Activated naive CD4-positive, alpha-beta T cell treated with anti-CD3 and anti-CD28 coated beads for 36 hours (primary cell): ENCODE measurements at regions of chr6 and their contacts with region 1.

Region 1: GRCh38 chr6:38570750-38571149 is 69.0 kb downstream of the BTBD9 start:
- DNase-seq: no peak
- H3K4me3 Mint-ChIP-seq: no peak overlapping the region
- H3K27ac Mint-ChIP-seq: no peak overlapping the region
- H3K4me1 Mint-ChIP-seq: peaks cover 23% of the 10 kb centered on the region
- H3K27me3 Mint-ChIP-seq: no peaks in the 10 kb centered on the region

Region 2: GRCh38 chr6:37698261-37699137 is 872.3 kb before region 1 on chr6:
- CTCF ChIA-PET with region 1: no interaction called
- intact Hi-C with region 1: loop called (anchors 2 kb)
- DNase-seq: peak; percentile 48
- H3K4me3 Mint-ChIP-seq: peak overlapping the region; percentile 98
- H3K27ac Mint-ChIP-seq: peak overlapping the region; percentile 82
- H3K4me1 Mint-ChIP-seq: peaks cover 18% of the 10 kb centered on the region
- H3K27me3 Mint-ChIP-seq: peaks cover 19% of the 10 kb centered on the region

Region 3: GRCh38 chr6:37791156-37791919 is 779.4 kb before region 1 on chr6:
- CTCF ChIA-PET with region 1: no interaction called
- intact Hi-C with region 1: loop called (anchors 5 kb)
- DNase-seq: peak; percentile 95
- H3K4me3 Mint-ChIP-seq: no peak overlapping the region
- H3K27ac Mint-ChIP-seq: no peak overlapping the region
- H3K4me1 Mint-ChIP-seq: peaks cover 11% of the 10 kb centered on the region
- H3K27me3 Mint-ChIP-seq: no peaks in the 10 kb centered on the region

Region 4: DNA sequence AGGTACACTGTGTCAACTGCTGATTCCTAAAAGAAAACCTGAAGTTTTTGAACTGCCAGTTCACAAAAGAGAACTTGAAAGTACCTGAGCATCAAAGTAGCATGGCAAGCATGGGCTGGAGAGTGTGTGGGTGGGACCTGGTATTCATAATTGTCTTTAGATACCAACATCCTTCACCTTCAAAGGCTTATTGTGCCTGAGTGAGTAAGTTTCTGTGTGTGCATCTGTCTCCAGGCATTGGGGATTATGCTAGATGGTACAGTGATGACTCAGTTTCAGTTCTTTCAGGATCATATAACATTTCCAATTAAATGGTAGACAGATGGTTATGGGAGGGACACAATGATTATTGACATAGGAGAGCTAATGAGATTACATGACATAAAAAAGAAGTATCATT is 512.8 kb before region 1 on chr6:
- CTCF ChIA-PET with region 1: no interaction called
- intact Hi-C with region 1: loop called (anchors 1 kb)
- DNase-seq: peak; percentile 88
- H3K4me3 Mint-ChIP-seq: no peak overlapping the region
- H3K27ac Mint-ChIP-seq: peak overlapping the region; percentile 13
- H3K4me1 Mint-ChIP-seq: peaks cover 23% of the 10 kb centered on the region
- H3K27me3 Mint-ChIP-seq: no peaks in the 10 kb centered on the region

Region 5: DNA sequence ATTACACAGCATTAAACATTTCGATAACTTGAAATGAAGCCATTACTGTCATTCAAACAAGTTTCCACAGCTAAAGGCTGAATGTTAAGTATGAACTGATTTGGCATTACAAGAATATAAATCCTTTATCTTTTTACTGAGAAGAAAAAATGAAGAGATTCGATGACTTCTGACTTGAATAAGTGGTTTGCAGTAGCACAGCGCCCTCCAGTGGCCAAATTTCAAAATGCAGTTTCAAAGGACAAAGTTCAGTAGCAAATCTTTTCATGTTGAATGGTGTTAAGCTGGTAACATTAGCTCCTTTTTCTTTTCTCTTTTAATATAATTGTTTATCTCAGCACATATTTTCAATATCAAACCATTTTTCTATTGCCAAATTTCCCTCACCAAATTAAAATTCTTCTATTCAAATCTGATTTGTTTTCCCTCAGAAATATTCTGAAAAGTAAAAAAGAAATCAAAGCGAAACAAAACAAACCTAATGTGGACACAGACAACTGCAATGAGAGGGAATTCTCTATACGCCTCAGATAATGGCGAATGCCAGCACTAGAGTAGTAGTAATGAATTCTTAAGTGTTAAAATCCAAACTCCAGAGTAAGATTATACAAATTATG is 76.7 kb before region 1 on chr6:
- CTCF ChIA-PET with region 1: interaction called, 6 read pairs
- intact Hi-C with region 1: loop called (anchors 1 kb)
- DNase-seq: peak; percentile 95
- H3K4me3 Mint-ChIP-seq: no peak overlapping the region
- H3K27ac Mint-ChIP-seq: no peak overlapping the region
- H3K4me1 Mint-ChIP-seq: peaks cover 10% of the 10 kb centered on the region
- H3K27me3 Mint-ChIP-seq: no peaks in the 10 kb centered on the region

Region 6: GRCh38 chr6:38713812-38714211 is 143.1 kb after region 1 on chr6:
- CTCF ChIA-PET with region 1: no interaction called
- intact Hi-C with region 1: loop called (anchors 5 kb)
- DNase-seq: peak; percentile 77
- H3K4me3 Mint-ChIP-seq: no peak overlapping the region
- H3K27ac Mint-ChIP-seq: no peak overlapping the region
- H3K4me1 Mint-ChIP-seq: peaks cover 17% of the 10 kb centered on the region
- H3K27me3 Mint-ChIP-seq: peaks cover 18% of the 10 kb centered on the region